ENCODE measurements at regions of chr17 and their contacts with region 1.

Region 1: DNA sequence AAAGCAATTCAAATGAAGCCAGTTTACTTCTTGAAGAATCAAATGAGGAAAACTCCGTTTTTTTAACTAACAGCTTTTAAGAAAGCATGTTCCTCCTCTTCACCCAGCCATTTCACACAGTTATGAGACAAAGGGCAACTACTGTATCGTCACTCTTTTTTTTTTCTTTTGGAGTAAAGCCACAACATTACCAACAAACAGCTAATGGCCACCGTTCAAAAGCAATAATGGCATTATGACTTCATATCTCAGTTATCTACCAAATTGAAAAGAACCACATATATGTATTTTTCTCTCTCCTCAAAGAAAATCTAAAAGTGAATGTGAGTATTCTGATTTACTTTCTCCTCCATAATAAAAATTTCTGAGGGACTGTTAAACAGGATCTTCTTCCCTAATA is 14.5 kb downstream of the GRB2 start:
- DNase-seq: no peak
- ATAC-seq: no peak
- H3K4me3 ChIP-seq: peak overlapping the region; percentile 10
- H3K27ac ChIP-seq: peak overlapping the region; percentile 89
- H3K4me1 ChIP-seq: peaks cover 60% of the 10 kb centered on the region
- H3K27me3 ChIP-seq: no peaks in the 10 kb centered on the region
- CTCF ChIP-seq: no peak

Region 2: DNA sequence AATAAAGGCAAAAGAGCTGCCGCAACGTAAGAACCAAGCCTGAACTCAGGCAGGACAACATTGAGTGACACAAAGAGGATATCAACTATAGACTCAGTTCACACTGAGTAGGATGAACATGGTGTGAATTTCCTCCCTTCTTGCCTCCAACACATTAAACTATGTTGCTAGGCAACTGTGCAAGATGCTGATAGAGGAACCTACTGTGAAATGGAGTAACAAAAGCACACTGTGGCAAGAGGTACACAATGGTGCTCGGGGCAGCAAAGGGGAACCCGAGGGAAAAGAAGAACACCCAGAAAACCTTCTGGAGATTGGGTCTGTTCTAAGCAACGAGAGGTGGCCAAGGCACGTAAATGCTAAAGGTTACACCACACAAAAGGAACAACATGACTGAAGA is 19.6 kb before region 1 on chr17:
- intact Hi-C with region 1: loop called in 1 of 2 experiments (anchors 2 kb)
- DNase-seq: no peak
- ATAC-seq: no peak
- H3K4me3 ChIP-seq: no peak overlapping the region
- H3K27ac ChIP-seq: peak overlapping the region; percentile 67
- H3K4me1 ChIP-seq: peaks cover 49% of the 10 kb centered on the region
- H3K27me3 ChIP-seq: no peaks in the 10 kb centered on the region
- CTCF ChIP-seq: no peak

Measured in psoas muscle (tissue), 8 donors.